ENCODE measurements at regions of chr1 and their contacts with region 1.

Region 1: GRCh38 chr1:207672522-207673130 is 27.7 kb downstream of the CR1L start:
- DNase-seq: peak; percentile 31
- H3K4me3 ChIP-seq: no peak overlapping the region
- H3K27ac ChIP-seq: no peak overlapping the region
- H3K4me1 ChIP-seq: peaks cover 14% of the 10 kb centered on the region
- H3K27me3 ChIP-seq: peaks cover 15% of the 10 kb centered on the region
- CTCF ChIP-seq: peak; percentile 41 to 60

Region 2: GRCh38 chr1:206608108-206608698 is 1064.4 kb before region 1 on chr1:
- CTCF ChIA-PET with region 1: no interaction called
- dilution Hi-C with region 1: no loop called
- in situ Hi-C with region 1: no loop called
- intact Hi-C with region 1: no loop called
- DNase-seq: peak; percentile 33
- H3K4me3 ChIP-seq: no peak overlapping the region
- H3K27ac ChIP-seq: no peak overlapping the region
- H3K4me1 ChIP-seq: peaks cover 9% of the 10 kb centered on the region
- H3K27me3 ChIP-seq: no peaks in the 10 kb centered on the region
- CTCF ChIP-seq: peak; percentile 85 to 94

Region 3: GRCh38 chr1:207084701-207085180 is 587.9 kb before region 1 on chr1:
- CTCF ChIA-PET with region 1: no interaction called
- dilution Hi-C with region 1: no loop called
- in situ Hi-C with region 1: no loop called
- intact Hi-C with region 1: loop called (anchors 2 kb)
- DNase-seq: peak; percentile 59
- H3K4me3 ChIP-seq: no peak overlapping the region
- H3K27ac ChIP-seq: no peak overlapping the region
- H3K4me1 ChIP-seq: peaks cover 3% of the 10 kb centered on the region
- H3K27me3 ChIP-seq: no peaks in the 10 kb centered on the region
- CTCF ChIP-seq: peak; percentile 56 to 73

Region 4: DNA sequence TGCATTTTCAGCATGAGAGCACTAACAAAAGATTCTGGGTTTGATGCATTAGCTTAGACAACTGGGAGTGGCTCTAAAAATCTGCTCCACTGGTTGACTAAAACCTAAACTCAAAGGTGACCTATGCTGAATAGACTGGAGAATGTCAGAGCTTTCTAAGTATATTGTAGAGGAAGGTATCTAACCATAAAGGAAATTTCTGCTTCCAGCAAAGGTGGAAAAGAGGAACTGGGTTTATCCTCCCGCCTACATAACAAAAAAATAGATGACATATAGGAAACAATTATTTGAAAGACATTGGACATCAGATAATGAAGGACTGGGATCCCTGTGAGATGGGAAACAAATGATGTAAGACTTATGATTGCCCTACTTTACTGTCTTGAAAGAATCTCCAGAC is 254.3 kb before region 1 on chr1:
- CTCF ChIA-PET with region 1: no interaction called
- dilution Hi-C with region 1: no loop called
- in situ Hi-C with region 1: no loop called
- intact Hi-C with region 1: no loop called
- DNase-seq: no peak
- H3K4me3 ChIP-seq: no peak overlapping the region
- H3K27ac ChIP-seq: no peak overlapping the region
- H3K4me1 ChIP-seq: no peaks in the 10 kb centered on the region
- H3K27me3 ChIP-seq: peaks cover 9% of the 10 kb centered on the region
- CTCF ChIP-seq: no peak

Region 5: GRCh38 chr1:207579436-207579799 is 93.2 kb before region 1 on chr1:
- CTCF ChIA-PET with region 1: no interaction called
- dilution Hi-C with region 1: no loop called
- in situ Hi-C with region 1: no loop called
- intact Hi-C with region 1: loop called (anchors 1 kb)
- DNase-seq: peak; percentile 54
- H3K4me3 ChIP-seq: no peak overlapping the region
- H3K27ac ChIP-seq: no peak overlapping the region
- H3K4me1 ChIP-seq: no peaks in the 10 kb centered on the region
- H3K27me3 ChIP-seq: no peaks in the 10 kb centered on the region
- CTCF ChIP-seq: peak; percentile 47 to 70

Region 6: GRCh38 chr1:207619871-207620542 is 52.6 kb before region 1 on chr1:
- CTCF ChIA-PET with region 1: interaction called, 6 read pairs
- dilution Hi-C with region 1: no loop called
- in situ Hi-C with region 1: no loop called
- intact Hi-C with region 1: loop called (anchors 2 kb)
- DNase-seq: peak; percentile 39
- H3K4me3 ChIP-seq: no peak overlapping the region
- H3K27ac ChIP-seq: no peak overlapping the region
- H3K4me1 ChIP-seq: no peaks in the 10 kb centered on the region
- H3K27me3 ChIP-seq: peaks cover 3% of the 10 kb centered on the region
- CTCF ChIP-seq: peak; percentile 80 to 82

Region 7: GRCh38 chr1:207711285-207711684 is 38.7 kb after region 1 on chr1:
- CTCF ChIA-PET with region 1: no interaction called
- dilution Hi-C with region 1: loop called (anchors 5 kb)
- in situ Hi-C with region 1: no loop called
- intact Hi-C with region 1: no loop called
- DNase-seq: peak; percentile 14
- H3K4me3 ChIP-seq: no peak overlapping the region
- H3K27ac ChIP-seq: no peak overlapping the region
- H3K4me1 ChIP-seq: peaks cover 15% of the 10 kb centered on the region
- H3K27me3 ChIP-seq: no peaks in the 10 kb centered on the region
- CTCF ChIP-seq: no peak

Region 8: DNA sequence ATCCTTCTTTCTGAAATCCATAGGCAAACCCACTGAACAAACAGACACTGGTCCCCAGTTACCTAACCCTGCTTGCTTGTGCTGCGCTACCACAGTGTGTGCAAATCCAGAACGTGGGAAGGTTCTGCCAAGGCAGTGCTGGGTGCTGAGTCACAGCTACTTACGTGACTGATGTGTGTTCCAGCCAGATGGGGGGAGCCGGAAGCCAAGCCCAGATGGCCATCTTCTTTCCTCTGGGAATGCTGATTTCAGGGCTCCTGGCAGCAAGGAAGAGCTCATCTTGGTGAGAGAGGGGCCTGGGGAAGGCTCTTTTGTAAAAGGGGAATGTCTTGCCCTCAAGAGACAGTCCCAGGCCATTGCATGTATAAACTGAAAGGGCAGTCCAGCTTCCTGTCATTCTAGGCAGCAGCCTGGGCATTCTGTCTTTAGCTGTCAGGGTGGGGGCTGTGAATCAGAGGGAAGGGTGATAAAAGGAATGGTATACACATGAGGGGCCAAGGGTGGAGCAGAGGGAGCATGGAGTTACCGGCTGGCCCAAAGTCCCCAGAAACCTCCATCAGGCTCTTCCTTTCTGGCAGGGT is 133.3 kb after region 1 on chr1:
- CTCF ChIA-PET with region 1: no interaction called
- dilution Hi-C with region 1: no loop called
- in situ Hi-C with region 1: no loop called
- intact Hi-C with region 1: no loop called
- DNase-seq: peak; percentile 91
- H3K4me3 ChIP-seq: peak overlapping the region in 1 of 3 experiments; percentile 7
- H3K27ac ChIP-seq: peak overlapping the region; percentile 96
- H3K4me1 ChIP-seq: peaks cover 58% of the 10 kb centered on the region
- H3K27me3 ChIP-seq: no peaks in the 10 kb centered on the region
- CTCF ChIP-seq: no peak

Region 9: GRCh38 chr1:208131621-208132286 is 459.1 kb after region 1 on chr1:
- CTCF ChIA-PET with region 1: no interaction called
- dilution Hi-C with region 1: no loop called
- in situ Hi-C with region 1: no loop called
- intact Hi-C with region 1: no loop called
- DNase-seq: no peak
- H3K4me3 ChIP-seq: no peak overlapping the region
- H3K27ac ChIP-seq: no peak overlapping the region
- H3K4me1 ChIP-seq: peaks cover 7% of the 10 kb centered on the region
- H3K27me3 ChIP-seq: no peaks in the 10 kb centered on the region
- CTCF ChIP-seq: no peak